ENCODE measurements at regions of chr17 and their contacts with region 1.

Region 1: GRCh38 chr17:6011206-6011605 is 59.0 kb upstream of the WSCD1 start:
- DNase-seq: no peak
- ATAC-seq: no peak
- H3K4me3 ChIP-seq: no peak overlapping the region
- H3K4me3 Mint-ChIP-seq: no peak overlapping the region
- H3K27ac ChIP-seq: no peak overlapping the region
- H3K27ac Mint-ChIP-seq: no peak overlapping the region
- H3K4me1 ChIP-seq: no peaks in the 10 kb centered on the region
- H3K4me1 Mint-ChIP-seq: no peaks in the 10 kb centered on the region
- H3K27me3 ChIP-seq: peaks cover 0 to 15% of the 10 kb centered on the region in 2 experiments
- H3K27me3 Mint-ChIP-seq: peaks cover 30 to 31% of the 10 kb centered on the region in 2 donors

Region 2: DNA sequence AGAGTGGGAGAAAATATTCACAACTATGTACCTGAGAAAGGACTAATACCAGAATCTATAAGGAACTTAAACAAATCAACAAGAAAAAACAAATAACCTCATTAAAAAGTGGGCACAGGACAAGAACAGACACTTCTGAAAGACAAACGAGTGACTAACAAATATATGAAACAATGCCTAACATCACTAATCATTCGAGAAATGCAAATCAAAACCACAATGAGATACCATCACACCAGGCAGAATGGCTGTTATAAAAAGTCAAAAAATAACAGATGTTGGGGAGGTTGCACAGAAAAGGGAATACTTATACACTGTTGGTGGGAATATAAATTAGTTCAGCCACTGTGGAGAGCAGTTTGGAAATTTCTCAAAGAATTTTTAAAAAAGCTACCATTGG is 24.6 kb before region 1 on chr17:
- CTCF ChIA-PET with region 1: interaction called in 1 of 2 experiments, 11 read pairs
- POLR2A ChIA-PET with region 1: no interaction called
- DNase-seq: no peak
- ATAC-seq: no peak
- H3K4me3 ChIP-seq: no peak overlapping the region
- H3K4me3 Mint-ChIP-seq: no peak overlapping the region
- H3K27ac ChIP-seq: no peak overlapping the region
- H3K27ac Mint-ChIP-seq: no peak overlapping the region
- H3K4me1 ChIP-seq: no peaks in the 10 kb centered on the region
- H3K4me1 Mint-ChIP-seq: no peaks in the 10 kb centered on the region
- H3K27me3 ChIP-seq: peaks cover 0 to 2% of the 10 kb centered on the region in 2 experiments
- H3K27me3 Mint-ChIP-seq: peaks cover 14 to 23% of the 10 kb centered on the region in 2 donors

Region 3: DNA sequence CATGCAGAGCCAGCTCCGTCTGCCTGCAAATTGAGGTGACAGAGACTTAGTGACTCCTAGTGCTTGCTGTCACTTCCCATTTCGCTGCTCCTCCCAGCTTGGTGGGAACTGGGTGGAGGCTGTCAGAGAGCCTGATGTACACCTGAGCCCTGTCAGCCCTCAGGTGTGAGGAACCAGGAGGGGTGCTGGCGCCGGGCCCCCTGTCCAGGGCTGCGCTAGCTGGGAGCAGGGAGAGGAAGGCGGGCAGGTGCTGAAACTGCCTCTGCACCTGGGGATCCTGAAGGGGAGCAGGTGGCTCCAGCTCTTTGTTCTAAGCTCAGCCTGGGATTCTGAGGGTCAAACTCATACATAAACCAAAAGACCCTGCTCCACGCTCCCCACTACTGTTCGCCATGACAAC is 48.2 kb after region 1 on chr17:
- CTCF ChIA-PET with region 1: no interaction called
- POLR2A ChIA-PET with region 1: no interaction called
- DNase-seq: no peak
- ATAC-seq: no peak
- H3K4me3 ChIP-seq: no peak overlapping the region
- H3K4me3 Mint-ChIP-seq: no peak overlapping the region
- H3K27ac ChIP-seq: no peak overlapping the region
- H3K27ac Mint-ChIP-seq: no peak overlapping the region
- H3K4me1 ChIP-seq: no peaks in the 10 kb centered on the region
- H3K4me1 Mint-ChIP-seq: no peaks in the 10 kb centered on the region
- H3K27me3 ChIP-seq: peaks cover 0 to 30% of the 10 kb centered on the region in 2 experiments
- H3K27me3 Mint-ChIP-seq: peaks cover 54 to 58% of the 10 kb centered on the region in 2 donors

Measured in T-cell (primary cell).